ENCODE measurements at regions of chr4 and their contacts with region 1.

Region 1: GRCh38 chr4:15675356-15675755 is 6.3 kb upstream of the FAM200B start:
- DNase-seq: no peak
- ATAC-seq: no peak
- H3K4me3 ChIP-seq: no peak overlapping the region
- H3K27ac ChIP-seq: no peak overlapping the region
- H3K4me1 ChIP-seq: peaks cover 6% of the 10 kb centered on the region
- H3K27me3 ChIP-seq: no peaks in the 10 kb centered on the region
- CTCF ChIP-seq: no peak
- POLR2A ChIP-seq: no peak
- RAD21 ChIP-seq: no peak

Region 2: DNA sequence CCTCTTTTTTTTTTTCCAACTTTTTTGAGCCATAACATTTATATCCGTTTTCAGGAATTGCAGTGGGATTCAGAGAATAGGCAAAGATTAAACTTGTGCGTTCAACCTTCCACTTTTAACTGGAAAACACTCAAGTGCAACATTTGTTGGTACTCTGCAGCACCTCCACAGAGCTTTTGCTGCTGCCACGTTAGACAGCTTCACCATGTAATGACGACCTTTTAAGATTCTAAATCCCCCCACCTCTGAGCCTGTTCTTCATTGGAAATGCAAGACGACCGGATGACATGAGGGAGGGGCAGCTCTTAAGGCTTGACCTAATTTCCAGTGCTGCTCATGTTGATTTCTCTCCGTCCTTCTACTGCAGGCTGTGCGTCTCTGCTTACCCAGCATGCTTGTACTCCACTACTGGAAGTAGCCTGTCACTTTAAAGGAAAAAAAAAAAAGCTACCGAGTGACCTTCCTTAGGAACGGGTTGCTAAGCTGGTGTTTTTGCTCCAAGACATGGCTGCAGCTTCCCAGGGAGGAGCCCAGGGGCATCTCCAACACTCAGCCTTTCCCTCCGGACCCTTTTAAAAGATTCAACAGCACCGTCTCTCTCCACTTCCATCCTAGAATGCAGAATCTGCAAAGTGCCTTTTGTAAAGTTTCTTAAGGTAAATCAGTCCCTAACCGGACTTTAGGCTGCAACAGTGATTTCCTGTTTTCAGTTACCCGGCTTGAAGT is 205.8 kb before region 1 on chr4 and contains the start of gene CC2D2A:
- CTCF ChIA-PET with region 1: interaction called, 6 read pairs
- POLR2A ChIA-PET with region 1: interaction called, 12 read pairs
- dilution Hi-C with region 1: no loop called
- in situ Hi-C with region 1: no loop called
- intact Hi-C with region 1: no loop called
- DNase-seq: peak; percentile 69
- ATAC-seq: peak; percentile 92
- H3K4me3 ChIP-seq: peak within 1 kb of the TSS; percentile 69
- H3K27ac ChIP-seq: peak within 1 kb of the TSS; percentile 43; the same call in 1 of the 2 replicates
- H3K4me1 ChIP-seq: peaks cover 3% of the 10 kb centered on the region
- H3K27me3 ChIP-seq: no peaks in the 10 kb centered on the region
- CTCF ChIP-seq: no peak
- POLR2A ChIP-seq: no peak
- RAD21 ChIP-seq: no peak
- total RNA-seq, gene CC2D2A: 21.9 and 26.3 TPM in 2 replicates

Measured in IMR-90 (cell line).